BJ (cell line): ENCODE measurements at regions of chr6 and their contacts with region 1.

Region 1: DNA sequence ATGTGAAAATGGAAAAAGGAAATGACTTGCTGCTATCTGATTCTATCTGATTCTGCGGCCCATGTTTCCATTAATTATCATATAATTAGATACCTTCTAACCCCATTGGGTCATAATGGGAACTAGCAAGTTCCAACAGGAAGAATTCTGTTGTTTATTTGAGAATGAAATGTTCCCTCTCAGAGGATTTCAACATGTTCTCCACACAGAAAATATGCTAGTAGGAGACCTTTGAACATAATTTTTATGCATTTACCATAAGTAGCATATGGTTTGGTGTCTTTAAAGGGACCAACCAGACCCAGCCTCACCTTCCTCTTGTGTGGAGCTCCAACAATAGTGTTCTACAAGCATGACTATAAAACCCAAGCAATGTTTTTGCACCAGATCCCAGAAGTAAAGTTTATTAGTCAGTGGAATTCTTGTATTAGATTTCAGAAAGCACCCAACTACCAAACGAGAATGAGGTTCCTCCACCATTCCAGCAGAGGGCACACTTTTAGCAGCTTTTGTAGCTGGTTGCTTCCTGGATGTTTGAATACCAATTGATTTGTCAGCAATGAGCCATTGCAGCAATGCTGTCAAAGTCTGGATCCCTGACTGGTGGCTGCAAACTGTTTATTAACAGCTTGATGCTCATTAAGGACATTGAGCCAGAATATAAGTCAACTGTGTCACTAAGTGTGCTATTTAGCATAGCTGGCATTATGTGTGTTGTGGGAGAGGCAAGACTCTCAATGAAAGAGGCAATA is 143.6 kb upstream of the GJE1 start:
- DNase-seq: no peak
- H3K4me3 ChIP-seq: no peak overlapping the region
- H3K27me3 ChIP-seq: no peaks in the 10 kb centered on the region
- CTCF ChIP-seq: peak; percentile 82

Region 2: GRCh38 chr6:141726248-141726647 is 262.9 kb before region 1 on chr6:
- CTCF ChIA-PET with region 1: no interaction called
- POLR2A ChIA-PET with region 1: no interaction called
- DNase-seq: no peak
- H3K4me3 ChIP-seq: no peak overlapping the region
- H3K27me3 ChIP-seq: no peaks in the 10 kb centered on the region
- CTCF ChIP-seq: no peak

Region 3: DNA sequence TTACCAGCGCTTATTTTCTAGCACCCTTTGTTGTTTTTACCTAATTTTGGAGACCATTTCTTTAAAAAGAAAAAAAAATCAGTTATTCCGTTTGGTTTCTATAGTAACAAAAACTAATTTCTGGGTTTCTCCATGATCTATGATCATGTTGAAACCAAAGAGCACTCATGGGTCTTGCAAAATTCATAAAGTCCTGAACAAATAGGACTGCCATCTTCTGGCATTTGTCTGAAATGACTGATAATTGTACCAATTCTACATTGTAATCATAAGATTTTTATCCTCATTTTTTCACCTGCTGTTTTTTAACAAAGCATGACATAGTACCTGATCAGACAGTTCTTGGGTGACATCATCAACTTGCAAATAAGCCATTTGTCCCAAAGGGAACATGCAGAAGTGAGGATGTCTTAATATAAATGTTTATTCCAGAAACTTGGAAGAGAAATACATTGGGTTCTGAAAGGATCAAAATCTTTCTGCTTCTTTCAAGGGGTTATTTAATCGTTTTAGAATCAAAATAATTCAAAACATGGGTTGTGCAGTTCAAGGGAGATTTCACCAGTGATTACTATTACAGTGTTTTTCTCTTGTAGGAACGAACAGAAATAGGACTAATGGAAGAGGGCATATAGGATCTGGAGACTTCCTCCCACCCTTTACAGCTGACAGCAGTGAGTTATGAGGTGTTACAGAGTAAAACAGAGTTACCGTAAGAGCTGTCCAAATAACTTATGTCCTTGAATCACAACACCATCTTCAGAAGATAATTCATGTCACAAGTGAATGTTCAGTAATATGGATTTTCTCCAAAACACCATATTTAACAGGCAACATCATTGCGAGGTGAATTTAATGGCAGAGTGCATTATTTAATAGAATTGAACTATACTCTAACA is 56.5 kb after region 1 on chr6:
- CTCF ChIA-PET with region 1: interaction called, 15 read pairs
- POLR2A ChIA-PET with region 1: no interaction called
- DNase-seq: no peak
- H3K4me3 ChIP-seq: no peak overlapping the region
- H3K27me3 ChIP-seq: no peaks in the 10 kb centered on the region
- CTCF ChIP-seq: peak; percentile 44

Region 4: DNA sequence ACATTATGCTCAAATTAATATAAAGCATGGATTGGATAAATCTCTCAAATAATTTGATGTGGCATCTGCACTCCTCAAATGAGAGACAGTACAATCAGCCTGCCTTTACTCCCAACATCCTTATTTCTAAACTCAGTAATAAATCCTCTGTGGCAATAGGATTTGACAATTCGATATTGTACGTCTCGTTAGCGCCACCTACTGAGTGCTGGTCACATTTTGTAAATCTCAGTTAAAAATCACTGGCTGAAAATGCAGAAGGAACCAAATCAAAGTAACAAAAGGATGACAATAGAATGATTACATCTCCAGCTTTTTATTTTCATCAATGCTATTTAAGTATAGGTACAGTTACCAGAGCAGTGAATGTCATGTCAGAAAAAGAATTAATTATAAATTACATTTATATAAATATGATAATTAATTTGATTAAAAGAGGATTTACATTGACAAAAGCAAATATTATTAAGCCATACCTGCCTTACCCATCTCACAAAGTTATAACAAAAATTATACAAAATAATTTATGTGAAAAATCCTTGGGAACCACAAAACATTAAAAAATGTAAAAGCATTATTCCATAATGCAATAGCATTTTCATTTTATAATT is 123.4 kb after region 1 on chr6:
- CTCF ChIA-PET with region 1: interaction called, 45 read pairs
- POLR2A ChIA-PET with region 1: no interaction called
- DNase-seq: peak; percentile 10
- H3K4me3 ChIP-seq: no peak overlapping the region
- H3K27me3 ChIP-seq: no peaks in the 10 kb centered on the region
- CTCF ChIP-seq: peak; percentile 77

Region 5: DNA sequence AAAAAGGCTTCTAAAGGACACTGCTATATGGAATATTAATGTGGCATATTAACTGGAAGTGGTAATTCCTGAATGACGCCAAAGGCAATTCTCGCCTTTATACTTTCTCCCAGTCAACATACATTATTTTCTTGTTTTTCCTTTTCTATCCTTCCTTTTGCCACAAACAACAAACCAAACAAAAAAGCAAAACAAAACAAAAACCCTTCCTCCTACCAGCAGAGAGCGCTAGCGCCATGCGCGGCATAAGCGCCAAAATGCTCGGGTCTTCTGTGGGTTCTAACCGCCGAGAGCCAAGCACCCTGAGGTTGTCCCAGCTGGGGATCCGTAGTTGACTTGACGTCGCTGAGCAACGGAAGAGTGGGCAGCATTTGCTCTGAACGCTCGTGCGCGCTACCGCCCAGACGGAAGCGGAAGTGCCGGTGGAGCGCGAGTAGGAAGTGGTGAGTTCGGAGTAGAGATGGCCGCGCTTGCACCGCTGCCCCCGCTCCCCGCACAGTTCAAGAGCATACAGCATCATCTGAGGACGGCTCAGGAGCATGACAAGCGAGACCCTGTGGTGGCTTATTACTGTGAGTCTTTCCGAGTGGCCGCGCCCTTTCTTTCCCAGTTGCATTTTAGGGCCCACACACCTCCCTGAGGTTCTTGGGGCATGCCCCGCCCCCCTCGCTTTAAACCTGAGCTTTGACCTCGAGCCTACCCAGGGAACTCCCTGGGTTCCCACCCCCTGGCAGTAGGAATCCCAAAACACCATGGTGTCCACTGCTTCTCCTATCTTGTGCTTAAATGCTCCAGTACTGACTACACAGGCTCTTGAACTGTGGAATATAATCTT is 157.9 kb after region 1 on chr6 and contains the starts of genes NMBR and VTA1:
- CTCF ChIA-PET with region 1: no interaction called
- POLR2A ChIA-PET with region 1: no interaction called
- DNase-seq: peak; percentile 96
- H3K4me3 ChIP-seq: peak within 1 kb of the TSS; percentile 95
- H3K27me3 ChIP-seq: no peaks in the 10 kb centered on the region
- CTCF ChIP-seq: peak; percentile 88
- polyA plus RNA-seq, gene NMBR: 0.07 TPM in 1 of 2 replicates, not detected in the other
- polyA plus RNA-seq, gene VTA1: 66.7 and 115 TPM in 2 replicates